Right ventricle myocardium superior (tissue), 1 donor: ENCODE measurements at regions of chr1 and their contacts with region 1.

Region 1: DNA sequence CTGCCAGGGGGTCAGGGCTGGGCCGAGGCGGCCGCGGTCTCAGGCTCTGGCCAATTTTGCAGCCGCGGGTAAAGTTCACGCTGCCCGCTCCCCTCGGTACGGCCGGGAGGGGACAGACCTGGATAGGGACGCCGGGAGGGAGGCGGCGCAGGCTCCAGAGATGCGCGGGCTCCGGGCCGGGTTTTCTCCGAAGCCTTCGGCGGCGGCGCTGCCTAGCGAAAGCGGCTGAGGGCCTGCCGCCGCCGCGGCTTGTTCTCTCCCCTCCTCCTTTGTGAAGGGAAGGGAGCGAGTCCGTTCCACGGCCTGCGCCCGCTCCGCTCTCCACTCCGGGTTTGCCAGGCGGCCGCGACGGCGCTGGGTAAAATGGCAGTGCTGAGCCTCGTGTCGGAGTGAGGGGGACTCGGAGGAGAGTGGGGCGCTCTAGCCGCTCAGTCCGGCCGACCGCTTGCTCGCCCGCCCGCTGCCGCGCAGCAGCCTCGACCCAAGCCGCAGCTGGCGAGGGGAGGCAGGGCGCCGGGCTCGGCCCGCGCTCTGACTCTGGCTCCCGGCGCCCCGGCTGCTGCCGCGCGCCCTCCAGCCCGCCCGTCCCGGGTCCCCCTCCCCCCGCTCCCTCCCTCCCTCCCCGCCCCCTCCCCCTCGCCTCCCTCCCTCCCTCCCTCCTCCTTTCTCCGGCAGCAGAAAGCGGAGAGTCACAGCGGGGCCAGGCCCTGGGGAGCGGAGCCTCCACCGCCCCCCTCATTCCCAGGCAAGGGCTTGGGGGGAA is at the start of gene ARID1A:
- DNase-seq: peak; percentile 98
- ATAC-seq: peak; percentile 72
- total RNA-seq, gene ARID1A: 29.4 TPM

Region 2: DNA sequence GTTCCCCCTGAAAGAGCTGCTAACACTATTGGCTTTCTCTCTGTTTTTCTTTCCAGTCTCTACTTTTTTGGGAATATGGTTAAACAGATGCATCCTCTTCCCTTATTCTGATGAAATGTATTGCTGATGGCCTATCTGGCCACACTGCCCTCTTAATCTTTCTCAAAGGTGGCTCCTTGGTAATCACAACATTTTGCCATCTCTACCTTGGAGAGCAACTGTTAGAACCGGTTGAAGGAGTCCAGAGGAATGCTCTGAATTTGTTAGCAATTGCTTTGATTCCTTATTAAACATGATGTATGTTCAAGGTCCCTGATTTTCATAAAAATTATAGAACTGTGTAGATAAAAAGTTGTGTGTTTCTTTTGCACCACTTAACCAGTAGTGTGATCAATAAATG is 49.8 kb before region 1 on chr1:
- intact Hi-C with region 1: no loop called
- DNase-seq: no peak
- ATAC-seq: no peak

Region 3: GRCh38 chr1:26754086-26754874 is 58.7 kb after region 1 on chr1:
- intact Hi-C with region 1: loop called (anchors 5 kb)
- DNase-seq: no peak
- ATAC-seq: no peak

Region 4: GRCh38 chr1:26787706-26788514 is 92.4 kb after region 1 on chr1 and contains the start of gene PIGV:
- intact Hi-C with region 1: loop called (anchors 2 kb)
- DNase-seq: peak; percentile 94
- ATAC-seq: peak; percentile 91
- total RNA-seq, gene PIGV: 5.5 TPM

Region 5: GRCh38 chr1:27010989-27011764 is 315.6 kb after region 1 on chr1:
- intact Hi-C with region 1: no loop called
- DNase-seq: no peak
- ATAC-seq: no peak